Activated CD4-positive, alpha-beta T cell treated with anti-CD3 and anti-CD28 coated beads, Interleukin-2, amount 10 ng/mL, durations not matched to agents 24 days and 14 days (primary cell): ENCODE measurements at regions of chrX and their contacts with region 1.

Region 1: GRCh38 chrX:111123125-111123524 is 27.1 kb downstream of the PAK3 start:
- DNase-seq: peak; percentile 55
- H3K4me3 Mint-ChIP-seq: peak overlapping the region; percentile 77
- H3K27ac Mint-ChIP-seq: peak overlapping the region; percentile 88
- H3K4me1 Mint-ChIP-seq: peaks cover 14% of the 10 kb centered on the region
- H3K27me3 Mint-ChIP-seq: no peaks in the 10 kb centered on the region

Region 2: GRCh38 chrX:109782994-109783700 is 1340.0 kb before region 1 on chrX:
- intact Hi-C with region 1: loop called (anchors 10 kb)
- DNase-seq: peak; percentile 52
- H3K4me3 Mint-ChIP-seq: peak overlapping the region; percentile 75
- H3K27ac Mint-ChIP-seq: peak overlapping the region; percentile 95
- H3K4me1 Mint-ChIP-seq: peaks cover 17% of the 10 kb centered on the region
- H3K27me3 Mint-ChIP-seq: no peaks in the 10 kb centered on the region

Region 3: GRCh38 chrX:111098874-111099273 is 24.3 kb before region 1 on chrX:
- intact Hi-C with region 1: no loop called
- DNase-seq: peak; percentile 88
- H3K4me3 Mint-ChIP-seq: no peak overlapping the region
- H3K27ac Mint-ChIP-seq: no peak overlapping the region
- H3K4me1 Mint-ChIP-seq: peaks cover 13% of the 10 kb centered on the region
- H3K27me3 Mint-ChIP-seq: peaks cover 12% of the 10 kb centered on the region